Caco-2 (cell line): ENCODE measurements at regions of chr12 and their contacts with region 1.

Region 1: DNA sequence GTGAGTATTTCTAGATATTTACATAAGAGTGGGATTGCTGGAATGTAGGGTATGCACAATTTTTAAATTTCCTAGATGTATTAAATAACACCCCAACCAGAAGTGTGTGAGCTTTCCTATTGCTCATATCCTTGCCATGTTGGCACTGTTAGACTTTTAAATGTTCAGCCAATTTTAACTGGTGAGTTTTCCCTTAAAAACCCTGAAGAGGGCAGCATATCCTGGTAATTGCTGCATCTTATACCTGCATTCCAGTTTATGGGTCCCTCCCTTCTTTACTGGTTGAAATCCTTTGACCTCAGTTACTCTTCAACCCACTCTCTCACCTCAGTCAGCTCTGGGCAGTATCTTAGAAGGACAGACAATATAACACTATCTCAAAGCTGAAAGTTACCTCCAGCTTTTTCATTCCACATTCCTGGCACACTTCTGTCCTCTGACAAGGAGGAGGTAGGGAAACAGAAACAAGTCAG is 270.6 kb downstream of the PAWR start:
- DNase-seq: peak; percentile 79 to 81
- H3K4me3 ChIP-seq: no peak overlapping the region
- H3K4me3 Mint-ChIP-seq: peak overlapping the region; percentile 4
- H3K27ac Mint-ChIP-seq: peak overlapping the region; percentile 94
- H3K4me1 ChIP-seq: peaks cover 87% of the 10 kb centered on the region
- H3K4me1 Mint-ChIP-seq: peaks cover 81% of the 10 kb centered on the region
- H3K27me3 ChIP-seq: no peaks in the 10 kb centered on the region
- H3K27me3 Mint-ChIP-seq: no peaks in the 10 kb centered on the region
- CTCF ChIP-seq: peak; percentile 66 to 76

Region 2: DNA sequence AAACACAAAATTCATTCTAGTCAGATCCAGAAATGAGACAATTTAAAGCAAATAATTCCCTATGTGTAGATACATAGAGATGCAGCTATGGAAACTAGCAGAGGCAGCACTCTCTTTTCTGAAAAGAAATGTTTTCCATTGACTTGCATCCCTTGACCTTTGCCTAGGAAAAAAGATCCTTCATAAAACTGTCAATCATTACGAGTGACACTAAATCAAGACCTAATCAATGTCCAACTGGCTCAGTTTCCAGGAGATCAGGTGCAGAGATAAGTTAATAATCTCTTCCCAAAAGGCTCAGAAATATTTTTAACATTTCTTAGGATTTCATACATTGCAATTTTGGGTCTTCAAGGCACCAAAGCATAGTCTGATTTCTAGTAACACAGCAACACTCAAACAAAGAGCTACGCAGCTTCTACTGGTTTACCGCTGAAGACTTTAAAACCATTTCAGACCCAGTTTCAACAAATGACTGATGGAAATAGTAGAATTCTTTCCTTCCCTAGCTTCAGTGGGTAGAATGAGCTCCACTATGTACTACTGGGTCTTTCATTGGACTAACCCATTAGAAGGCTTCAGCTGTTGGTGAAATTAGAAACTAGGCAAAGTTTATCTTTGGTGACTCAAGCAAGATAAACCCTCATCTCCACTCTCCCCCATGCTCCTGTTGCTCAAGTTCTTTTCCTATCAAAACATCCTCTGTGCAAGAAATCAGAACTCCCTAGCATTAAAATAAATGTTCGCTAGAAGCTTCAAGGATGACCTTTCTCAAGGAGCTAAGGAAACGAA is 111.1 kb after region 1 on chr12:
- CTCF ChIA-PET with region 1: interaction called, 18 read pairs
- POLR2A ChIA-PET with region 1: interaction called, 4 read pairs
- intact Hi-C with region 1: loop called (anchors 1 kb)
- DNase-seq: no peak
- H3K4me3 ChIP-seq: no peak overlapping the region
- H3K4me3 Mint-ChIP-seq: no peak overlapping the region
- H3K27ac Mint-ChIP-seq: peak overlapping the region; percentile 78
- H3K4me1 ChIP-seq: peaks cover 62% of the 10 kb centered on the region
- H3K4me1 Mint-ChIP-seq: peaks cover 36% of the 10 kb centered on the region
- H3K27me3 ChIP-seq: no peaks in the 10 kb centered on the region
- H3K27me3 Mint-ChIP-seq: no peaks in the 10 kb centered on the region
- CTCF ChIP-seq: no peak

Region 3: DNA sequence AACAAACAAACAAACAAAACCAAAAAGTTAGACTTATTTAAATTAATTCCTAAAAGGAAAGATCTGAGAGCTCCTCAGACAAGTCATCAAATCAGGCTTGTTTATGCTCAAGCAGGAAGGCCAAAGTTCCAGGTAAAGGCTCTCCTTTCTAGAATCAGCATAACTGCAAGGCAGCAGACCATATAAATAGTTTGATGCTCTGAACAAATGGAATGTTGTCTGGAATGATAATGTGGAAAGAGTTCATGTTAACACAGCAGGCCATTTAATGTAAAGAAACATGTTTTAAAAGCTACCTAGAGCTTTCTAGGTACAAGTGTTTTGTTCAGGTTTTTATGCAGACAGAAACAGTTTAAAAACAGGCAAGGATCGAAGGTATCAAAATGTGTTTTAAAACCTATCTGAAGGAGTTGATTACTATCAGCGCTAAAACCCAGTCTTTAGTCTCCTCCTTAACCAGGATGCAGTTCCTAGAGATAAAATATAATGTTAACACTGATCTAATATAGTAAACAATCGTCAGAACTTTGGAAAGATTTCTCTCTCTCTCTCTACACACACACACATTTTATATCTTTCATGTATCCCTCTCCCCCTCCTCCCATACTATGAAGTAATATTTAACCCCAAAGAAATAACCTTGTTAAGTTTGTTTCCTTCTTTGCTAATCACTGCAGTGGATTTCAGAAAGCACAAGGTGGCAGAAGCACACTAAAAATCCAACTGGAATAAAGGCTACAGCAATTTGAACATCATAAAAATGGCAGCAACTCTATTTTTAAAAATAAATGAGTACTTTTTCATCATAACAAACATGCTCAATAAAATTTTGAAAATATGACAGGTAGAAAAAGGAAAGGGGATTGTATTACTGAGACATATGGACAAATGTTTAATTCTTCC is 135.1 kb after region 1 on chr12:
- CTCF ChIA-PET with region 1: interaction called, 3 read pairs
- POLR2A ChIA-PET with region 1: no interaction called
- intact Hi-C with region 1: loop called (anchors 1 kb)
- DNase-seq: peak in 1 of 2 experiments; percentile 49
- H3K4me3 ChIP-seq: no peak overlapping the region
- H3K4me3 Mint-ChIP-seq: peak overlapping the region; percentile 12
- H3K27ac Mint-ChIP-seq: peak overlapping the region; percentile 76
- H3K4me1 ChIP-seq: peaks cover 73% of the 10 kb centered on the region
- H3K4me1 Mint-ChIP-seq: peaks cover 34% of the 10 kb centered on the region
- H3K27me3 ChIP-seq: no peaks in the 10 kb centered on the region
- H3K27me3 Mint-ChIP-seq: no peaks in the 10 kb centered on the region
- CTCF ChIP-seq: peak; percentile 56 to 71

Region 4: DNA sequence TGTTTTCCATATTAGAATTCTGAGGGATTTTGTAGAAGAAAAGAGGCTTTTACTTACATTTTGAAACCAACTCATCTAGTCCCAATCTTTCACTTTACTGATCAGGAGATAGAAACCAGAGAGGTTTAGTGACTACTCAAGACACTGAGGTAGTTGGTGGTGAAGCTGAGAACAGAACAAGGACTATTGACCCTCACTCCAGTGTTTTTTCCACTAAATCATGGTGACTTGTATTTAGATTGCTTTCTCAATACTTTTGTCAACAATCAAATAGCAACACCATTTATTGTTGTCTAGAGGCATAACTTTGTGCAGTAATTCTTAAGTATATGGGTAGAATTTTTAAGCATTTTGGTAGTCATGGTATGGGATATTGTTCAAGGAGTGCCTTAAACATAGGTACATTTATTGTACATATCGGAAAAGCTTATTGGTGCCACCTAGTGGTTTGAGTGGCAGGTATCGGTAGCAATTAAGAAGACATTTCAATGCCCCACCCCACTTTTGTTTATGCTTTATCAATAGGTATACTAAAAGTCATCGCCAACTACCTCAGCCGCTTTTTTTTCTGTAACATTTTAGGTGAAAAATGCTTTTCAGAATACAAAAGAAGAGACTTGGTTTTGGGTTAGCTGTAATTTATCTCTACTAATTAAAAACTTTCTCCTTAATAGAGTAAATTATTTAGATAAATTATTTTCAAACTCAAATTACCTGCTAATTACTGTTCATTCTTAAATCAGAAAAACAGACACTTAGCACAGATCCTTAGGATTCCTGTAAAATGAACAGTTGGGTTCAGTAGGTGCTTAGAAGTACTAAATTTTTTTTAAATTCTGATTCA is 317.9 kb after region 1 on chr12:
- CTCF ChIA-PET with region 1: interaction called, 8 read pairs
- POLR2A ChIA-PET with region 1: no interaction called
- intact Hi-C with region 1: loop called (anchors 1 kb)
- DNase-seq: peak; percentile 62 to 69
- H3K4me3 ChIP-seq: no peak overlapping the region
- H3K4me3 Mint-ChIP-seq: no peak overlapping the region
- H3K27ac Mint-ChIP-seq: no peak overlapping the region
- H3K4me1 ChIP-seq: peaks cover 9% of the 10 kb centered on the region; the same call in 1 of the 2 replicates
- H3K4me1 Mint-ChIP-seq: peaks cover 6% of the 10 kb centered on the region
- H3K27me3 ChIP-seq: no peaks in the 10 kb centered on the region
- H3K27me3 Mint-ChIP-seq: no peaks in the 10 kb centered on the region
- CTCF ChIP-seq: peak; percentile 50 to 58